ENCODE measurements at regions of chr9 and their contacts with region 1.

Region 1: GRCh38 chr9:113095561-113095960 is 39.0 kb upstream of the ZFP37 start:
- DNase-seq: no peak
- ATAC-seq: no peak
- H3K4me3 ChIP-seq: no peak overlapping the region
- H3K27ac ChIP-seq: no peak overlapping the region
- H3K4me1 ChIP-seq: no peaks in the 10 kb centered on the region
- H3K27me3 ChIP-seq: peaks cover under 1 to 24% (median 22%) of the 10 kb centered on the region in 3 donors
- CTCF ChIP-seq: no peak
- POLR2A ChIP-seq: no peak

Region 2: DNA sequence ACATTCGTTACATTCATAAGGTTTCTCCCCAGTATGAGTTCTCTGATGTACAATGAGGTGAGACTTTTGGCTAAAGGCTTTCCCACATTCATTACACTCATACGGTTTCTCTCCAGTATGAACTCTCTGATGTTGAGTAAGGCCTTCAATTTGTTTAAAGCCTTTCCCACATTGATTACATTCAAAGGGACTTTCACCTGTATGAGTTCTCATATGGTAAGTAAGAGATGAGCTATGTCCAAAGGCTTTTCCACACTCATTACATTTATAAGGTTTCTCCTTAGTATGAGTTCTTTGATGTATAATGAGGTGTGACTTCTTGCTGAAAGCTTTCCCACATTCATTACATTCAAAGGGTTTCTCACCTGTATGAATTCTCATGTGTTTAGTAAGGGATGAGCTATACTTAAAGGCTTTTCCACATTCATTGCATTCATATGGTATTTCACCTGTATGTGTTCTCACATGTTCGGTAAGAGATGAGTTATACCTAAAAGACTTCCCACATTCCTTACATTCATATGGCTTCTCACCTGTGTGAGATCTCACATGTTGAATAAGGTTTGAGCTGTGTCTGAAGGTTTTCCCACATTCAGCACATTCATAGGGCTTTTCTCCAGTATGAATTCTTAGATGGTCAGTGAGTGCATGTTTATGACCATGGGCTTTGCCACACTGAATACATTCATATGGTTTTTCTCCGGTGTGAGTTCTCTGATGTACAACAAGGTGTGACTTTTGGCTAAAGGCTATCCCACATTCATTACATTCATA is 52.5 kb before region 1 on chr9:
- in situ Hi-C with region 1: no loop called
- intact Hi-C with region 1: loop called (anchors 10 kb)
- DNase-seq: no peak
- ATAC-seq: no peak
- H3K4me3 ChIP-seq: peak overlapping the region in 1 of 4 donors; percentile 12
- H3K27ac ChIP-seq: no peak overlapping the region
- H3K4me1 ChIP-seq: no peaks in the 10 kb centered on the region
- H3K27me3 ChIP-seq: peaks cover 0 to 3% (median 0%) of the 10 kb centered on the region in 3 donors
- CTCF ChIP-seq: no peak
- POLR2A ChIP-seq: no peak

Region 3: GRCh38 chr9:113632776-113633590 is 537.4 kb after region 1 on chr9:
- in situ Hi-C with region 1: no loop called
- intact Hi-C with region 1: no loop called
- DNase-seq: no peak
- ATAC-seq: no peak
- H3K4me3 ChIP-seq: no peak overlapping the region
- H3K27ac ChIP-seq: no peak overlapping the region
- H3K4me1 ChIP-seq: peaks cover 21 to 22% of the 10 kb centered on the region in 2 donors
- H3K27me3 ChIP-seq: no peaks in the 10 kb centered on the region
- CTCF ChIP-seq: no peak
- POLR2A ChIP-seq: no peak

Measured in gastrocnemius medialis (tissue), 4 donors.